ENCODE measurements at regions of chr16 and their contacts with region 1.

Region 1: GRCh38 chr16:56700195-56700594 is 17.9 kb downstream of the MT1X start:
- DNase-seq: no peak
- H3K4me3 Mint-ChIP-seq: no peak overlapping the region
- H3K27ac Mint-ChIP-seq: no peak overlapping the region
- H3K4me1 Mint-ChIP-seq: peaks cover 10% of the 10 kb centered on the region
- H3K27me3 Mint-ChIP-seq: peaks cover 26% of the 10 kb centered on the region

Region 2: DNA sequence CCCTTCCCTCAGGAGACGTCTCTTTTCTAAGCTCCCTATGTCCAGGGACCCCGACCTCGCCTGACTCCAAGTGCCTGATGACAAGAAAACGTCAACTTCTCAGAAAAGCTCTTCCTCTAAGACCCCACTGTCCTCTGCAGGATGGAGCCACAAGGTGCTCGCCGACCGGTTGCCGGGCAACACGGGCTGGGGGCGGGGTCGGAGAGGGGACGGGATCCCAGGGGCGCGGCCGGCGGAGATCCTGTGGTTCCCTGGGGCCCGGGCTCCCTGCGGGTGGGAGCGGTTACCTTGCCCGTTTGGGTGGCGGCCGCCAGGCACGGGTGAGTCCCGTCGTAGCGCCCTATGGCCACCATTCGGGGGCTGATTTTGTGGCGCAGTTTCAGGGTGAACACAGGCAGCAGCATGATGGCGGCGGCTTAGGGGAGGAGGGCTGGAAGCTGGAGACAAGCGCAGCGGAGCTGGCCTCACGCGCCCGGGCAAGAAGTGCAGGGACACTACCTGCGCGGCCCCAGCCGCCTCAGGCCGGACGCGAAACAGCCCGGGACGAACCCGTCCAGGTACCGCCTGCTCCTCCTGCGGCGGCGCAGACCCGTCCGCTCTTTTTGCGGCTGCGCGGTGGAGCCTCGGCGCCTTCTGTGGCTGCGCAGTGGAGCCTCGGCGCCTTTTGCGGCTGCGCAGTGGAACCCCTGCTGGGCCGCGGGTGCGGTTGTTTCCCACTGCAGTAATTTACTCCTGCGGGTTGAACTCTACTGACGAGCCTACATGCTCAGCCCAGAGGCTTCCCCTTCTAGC is 180.5 kb before region 1 on chr16 and contains the start of gene BBS2:
- CTCF ChIA-PET with region 1: interaction called, 15 read pairs
- DNase-seq: peak; percentile 85
- H3K4me3 Mint-ChIP-seq: peak within 1 kb of the TSS; percentile 78
- H3K27ac Mint-ChIP-seq: peak within 1 kb of the TSS; percentile 86
- H3K4me1 Mint-ChIP-seq: peaks cover 20% of the 10 kb centered on the region
- H3K27me3 Mint-ChIP-seq: peaks cover 10% of the 10 kb centered on the region

Region 3: DNA sequence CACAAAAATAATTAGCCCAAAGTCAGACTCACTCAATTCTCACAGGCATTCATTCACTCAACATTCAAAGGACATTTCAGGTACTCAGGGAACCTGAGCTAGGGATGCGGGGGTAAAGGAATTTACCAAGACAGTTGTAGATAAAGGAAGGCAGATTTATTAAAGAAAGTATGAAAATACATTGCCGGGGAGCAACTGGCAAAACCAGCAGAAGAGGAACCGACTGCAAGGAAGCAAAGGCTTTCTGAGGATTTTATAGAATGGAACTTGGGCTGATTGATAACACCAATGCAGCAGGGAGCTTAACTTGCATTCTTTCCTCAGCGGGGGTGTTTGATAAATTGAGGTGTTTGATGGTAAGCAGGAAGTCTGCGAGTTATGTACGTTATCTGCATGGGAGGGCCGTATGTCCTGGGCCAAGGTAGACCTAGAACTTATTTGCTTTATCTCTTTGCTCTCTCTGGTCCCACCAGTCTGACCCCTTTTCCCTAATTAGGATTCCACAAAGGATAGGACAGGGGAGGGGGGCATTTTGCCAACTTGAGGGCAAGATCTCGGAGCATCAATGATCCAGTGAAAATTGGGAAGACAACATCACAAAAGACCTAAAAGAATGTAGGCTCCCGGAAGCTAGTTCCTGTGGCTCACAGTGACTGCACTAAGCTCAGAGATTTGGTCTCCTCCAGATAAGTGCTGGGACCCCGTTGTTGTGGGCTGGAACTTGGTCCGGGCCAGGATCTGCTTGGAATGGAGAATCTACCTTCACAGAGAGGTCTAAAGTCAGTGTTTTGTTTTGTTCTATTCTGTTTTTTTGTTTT is 116.6 kb before region 1 on chr16:
- CTCF ChIA-PET with region 1: interaction called, 26 read pairs
- DNase-seq: no peak
- H3K4me3 Mint-ChIP-seq: no peak overlapping the region
- H3K27ac Mint-ChIP-seq: no peak overlapping the region
- H3K4me1 Mint-ChIP-seq: no peaks in the 10 kb centered on the region
- H3K27me3 Mint-ChIP-seq: peaks cover 73% of the 10 kb centered on the region

Region 4: GRCh38 chr16:56643080-56643778 is 57.0 kb before region 1 on chr16:
- CTCF ChIA-PET with region 1: interaction called, 15 read pairs
- DNase-seq: peak; percentile 88
- H3K4me3 Mint-ChIP-seq: peak overlapping the region; percentile 64
- H3K27ac Mint-ChIP-seq: no peak overlapping the region
- H3K4me1 Mint-ChIP-seq: peaks cover 28% of the 10 kb centered on the region
- H3K27me3 Mint-ChIP-seq: peaks cover 91% of the 10 kb centered on the region

Region 5: GRCh38 chr16:56789360-56789759 is 89.2 kb after region 1 on chr16:
- CTCF ChIA-PET with region 1: interaction called, 10 read pairs
- DNase-seq: peak; percentile 66
- H3K4me3 Mint-ChIP-seq: no peak overlapping the region
- H3K27ac Mint-ChIP-seq: no peak overlapping the region
- H3K4me1 Mint-ChIP-seq: no peaks in the 10 kb centered on the region
- H3K27me3 Mint-ChIP-seq: no peaks in the 10 kb centered on the region

Measured in activated naive CD4-positive, alpha-beta T cell treated with anti-CD3 and anti-CD28 coated beads, Interleukin-2, amount 10 ng/mL, durations not matched to agents 7 days and 5 days (primary cell).